ENCODE measurements at regions of chr5 and their contacts with region 1.

Region 1: DNA sequence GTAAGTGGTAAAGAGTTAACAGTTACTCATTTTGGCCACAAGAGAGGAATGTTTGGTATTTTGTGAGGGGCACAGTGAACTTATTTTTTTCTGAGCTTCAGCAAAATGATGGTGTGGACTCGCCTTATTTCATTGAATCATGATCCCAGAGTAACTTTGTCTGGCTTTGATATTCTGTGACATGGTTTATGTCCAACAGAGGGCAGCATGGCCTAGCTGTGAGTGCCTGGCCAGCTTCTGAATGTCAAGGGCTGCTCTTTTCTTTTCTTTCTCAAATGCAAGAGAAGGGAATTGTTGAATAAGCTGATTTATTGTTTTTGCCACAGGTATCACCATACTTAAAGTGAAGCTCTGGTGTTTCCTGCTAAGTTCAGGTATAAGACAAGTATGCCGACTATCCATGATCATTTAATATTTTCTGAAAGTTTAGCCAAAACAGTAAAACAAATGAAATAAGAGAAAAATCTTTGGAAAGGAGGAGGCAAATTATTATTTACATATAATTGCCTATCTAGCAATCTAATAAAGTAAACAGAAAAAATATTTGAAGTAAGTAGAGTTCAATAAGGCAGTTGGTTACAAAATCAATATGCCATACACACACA is 31.7 kb downstream of the MRPL22 start:
- DNase-seq: no peak
- H3K4me3 ChIP-seq: no peak overlapping the region
- CTCF ChIP-seq: peak; percentile 56

Region 2: DNA sequence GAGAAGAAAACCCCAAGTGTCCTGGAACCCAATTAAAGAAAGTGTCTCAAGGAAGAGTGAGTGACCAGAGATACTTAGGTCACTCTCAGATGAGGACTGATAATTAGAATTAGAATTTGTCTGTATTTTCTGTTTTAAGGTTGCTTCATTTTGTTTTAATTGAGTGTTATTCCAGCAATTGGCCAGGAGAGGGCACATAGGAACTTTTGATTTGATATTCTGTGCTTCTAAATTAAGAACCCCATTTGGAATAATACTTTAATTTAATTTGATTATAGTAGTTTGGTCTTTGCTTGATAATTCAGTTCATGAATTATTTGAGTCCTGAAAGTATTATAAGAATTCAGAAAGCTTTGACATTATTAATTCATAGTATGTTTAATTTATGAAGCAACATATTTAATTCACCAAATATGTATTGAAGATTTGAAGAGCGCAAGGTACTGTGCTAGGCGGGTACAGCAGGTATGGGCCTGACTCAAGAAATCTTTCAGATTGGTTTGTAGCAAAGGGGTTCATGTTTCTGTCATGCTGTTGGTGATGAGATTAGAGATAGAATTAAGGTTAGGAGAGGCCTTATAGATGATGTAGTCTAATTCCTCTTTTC is 26.8 kb before region 1 on chr5:
- CTCF ChIA-PET with region 1: interaction called, 15 read pairs
- POLR2A ChIA-PET with region 1: no interaction called
- DNase-seq: no peak
- H3K4me3 ChIP-seq: no peak overlapping the region
- CTCF ChIP-seq: peak; percentile 29

Region 3: DNA sequence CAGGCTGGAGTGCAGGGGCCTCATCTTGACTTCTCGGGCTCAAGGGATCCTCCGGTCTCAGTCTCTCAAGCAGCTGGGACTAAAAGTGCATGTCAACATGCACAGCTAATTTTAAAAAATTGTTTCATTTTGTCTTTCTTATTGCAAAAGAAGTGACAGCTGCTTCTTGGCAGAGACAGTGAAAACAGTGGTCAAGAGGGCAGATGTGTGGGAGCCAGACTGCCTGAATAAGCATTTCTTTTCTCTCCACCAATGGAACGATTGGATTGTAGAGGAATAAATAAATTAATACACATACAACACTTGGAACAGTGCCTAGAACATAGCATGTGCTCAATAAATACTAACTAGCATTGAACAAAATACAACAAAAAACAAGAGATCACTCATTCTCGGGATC is 13.6 kb after region 1 on chr5:
- CTCF ChIA-PET with region 1: interaction called, 31 read pairs
- POLR2A ChIA-PET with region 1: no interaction called
- DNase-seq: no peak
- H3K4me3 ChIP-seq: no peak overlapping the region
- CTCF ChIP-seq: no peak

Region 4: GRCh38 chr5:155027993-155028629 is 55.5 kb after region 1 on chr5:
- CTCF ChIA-PET with region 1: interaction called, 15 read pairs
- POLR2A ChIA-PET with region 1: no interaction called
- DNase-seq: no peak
- H3K4me3 ChIP-seq: no peak overlapping the region
- CTCF ChIP-seq: no peak

Region 5: DNA sequence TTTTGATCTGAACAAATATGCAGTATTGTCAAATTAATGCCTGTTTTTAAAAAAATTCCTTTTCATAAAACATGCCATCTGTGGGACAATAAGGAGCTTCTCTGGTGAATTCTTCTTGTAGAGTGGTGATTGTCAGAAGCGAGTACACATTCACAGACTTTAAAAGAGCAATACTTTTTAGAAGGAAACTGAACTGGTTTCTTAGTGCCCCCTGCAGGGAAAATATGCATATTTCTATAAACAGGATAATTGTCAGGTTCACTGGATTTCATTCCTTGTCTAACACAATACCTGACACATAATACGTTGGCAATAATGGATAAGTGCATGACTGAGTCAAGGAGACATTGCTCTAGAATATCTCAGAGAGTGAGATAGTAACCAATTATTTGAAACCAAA is 174.6 kb after region 1 on chr5:
- CTCF ChIA-PET with region 1: interaction called, 123 read pairs
- POLR2A ChIA-PET with region 1: no interaction called
- DNase-seq: no peak
- H3K4me3 ChIP-seq: no peak overlapping the region
- CTCF ChIP-seq: no peak